Sciatic nerve (tissue), 2 donors: ENCODE measurements at regions of chr11 and their contacts with region 1.

Region 1: GRCh38 chr11:73393479-73394380 is 17.5 kb downstream of the RELT start:
- DNase-seq: peak; percentile 85
- ATAC-seq: peak; percentile 75

Region 2: DNA sequence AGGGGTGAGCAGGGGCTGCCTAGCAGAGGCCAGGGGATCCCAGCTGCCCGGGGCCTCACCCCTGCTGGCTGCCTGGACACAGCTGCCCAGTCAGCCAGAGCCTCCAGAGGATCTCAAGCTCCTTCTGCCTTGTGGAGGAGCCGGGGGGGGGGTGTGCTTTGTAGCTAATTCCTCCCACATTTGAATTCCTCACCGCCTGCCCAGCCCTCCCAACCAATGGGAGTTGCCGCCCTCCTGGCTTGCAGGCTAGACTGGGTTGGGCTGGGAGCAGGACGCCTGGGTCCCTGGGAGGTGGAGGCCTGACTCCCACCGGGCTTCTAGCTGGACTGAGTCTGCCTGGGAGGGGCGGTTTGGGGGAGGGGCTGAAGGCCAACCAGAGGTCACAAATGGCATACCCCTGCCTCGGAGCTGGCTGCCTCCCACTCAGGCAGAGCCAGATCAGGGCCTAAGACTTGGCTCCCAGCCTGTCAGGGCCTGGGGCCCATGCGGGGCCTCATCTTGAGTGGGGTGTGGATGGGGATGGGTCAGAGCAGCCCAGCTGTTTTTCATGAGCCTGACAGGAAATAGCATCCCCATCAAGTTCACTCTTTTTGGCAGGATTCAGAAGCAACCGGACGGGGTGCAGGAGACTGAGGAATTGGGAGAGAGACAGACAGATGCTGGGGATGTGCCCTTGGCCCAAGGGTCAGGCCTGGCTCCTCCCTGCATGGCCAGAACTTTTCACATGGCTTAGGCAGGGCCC is 690.3 kb before region 1 on chr11:
- intact Hi-C with region 1: no loop called
- DNase-seq: peak; percentile 89
- ATAC-seq: peak; percentile 90

Region 3: DNA sequence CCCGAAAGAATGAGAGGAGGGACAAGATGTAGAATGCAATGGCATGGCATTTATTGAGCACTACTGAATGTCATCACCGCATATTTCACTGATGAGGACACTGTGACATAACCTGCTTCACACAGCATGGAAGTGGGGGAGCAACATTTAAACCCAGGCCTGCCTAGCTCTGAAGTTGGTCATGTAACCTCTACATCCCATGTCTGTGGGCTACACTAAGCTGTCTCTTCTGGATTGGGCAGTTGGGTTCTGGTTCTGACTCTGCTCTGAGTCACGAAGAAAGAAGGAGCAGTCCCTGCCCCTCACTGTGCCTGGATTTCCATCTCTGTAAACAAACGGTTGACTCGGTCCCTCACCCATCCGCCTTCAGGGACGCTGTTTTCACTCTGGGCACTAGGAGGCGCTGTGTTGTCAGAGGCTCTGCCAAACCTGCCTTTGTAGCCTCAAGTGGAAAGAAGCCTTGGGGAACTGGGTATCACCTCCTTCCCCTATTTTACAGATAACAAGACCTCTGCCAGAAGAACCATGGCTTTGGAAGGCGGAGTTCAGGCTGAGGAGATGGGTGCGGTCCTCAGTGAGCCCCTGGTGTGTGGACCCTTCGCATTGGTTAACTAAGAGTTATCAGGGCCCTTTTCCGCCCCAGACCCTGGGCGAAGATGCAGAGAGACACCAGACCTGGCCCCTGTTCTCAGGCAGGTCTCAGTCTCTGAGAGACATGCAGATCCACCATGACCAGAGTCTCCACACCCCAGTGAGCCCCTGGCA is 98.3 kb before region 1 on chr11:
- intact Hi-C with region 1: loop called (anchors 5 kb)
- DNase-seq: peak; percentile 80
- ATAC-seq: peak; percentile 44